A673 (cell line): ENCODE measurements at regions of chr6 and their contacts with region 1.

Region 1: DNA sequence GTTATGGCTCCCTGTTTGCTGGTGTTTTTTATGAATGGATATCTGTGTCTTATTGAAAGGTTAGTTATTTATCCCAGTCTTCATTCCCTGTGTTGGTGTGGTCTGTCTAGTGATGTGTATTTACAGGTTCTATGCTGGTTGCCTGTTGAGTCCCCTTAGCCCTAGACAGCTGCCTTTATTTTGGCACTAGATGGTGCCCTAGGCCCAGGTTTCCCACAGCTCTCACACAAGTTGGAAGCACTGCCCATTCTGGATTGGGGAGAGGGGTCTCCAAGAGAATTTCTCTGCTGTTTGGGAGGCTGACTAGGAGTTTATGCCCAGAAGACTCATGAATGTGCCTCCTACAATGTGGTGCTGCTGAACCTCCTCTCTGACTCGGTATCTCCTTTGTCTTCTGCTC is 12.4 kb downstream of the GRM1 start:
- DNase-seq: peak; percentile 68
- H3K4me3 ChIP-seq: no peak overlapping the region
- H3K27ac ChIP-seq: no peak overlapping the region
- H3K4me1 ChIP-seq: no peaks in the 10 kb centered on the region
- H3K27me3 ChIP-seq: peaks cover 8% of the 10 kb centered on the region
- CTCF ChIP-seq: peak; percentile 68

Region 2: GRCh38 chr6:146153040-146153758 is 111.9 kb after region 1 on chr6:
- CTCF ChIA-PET with region 1: no interaction called
- POLR2A ChIA-PET with region 1: no interaction called
- intact Hi-C with region 1: no loop called
- DNase-seq: no peak
- H3K4me3 ChIP-seq: no peak overlapping the region
- H3K27ac ChIP-seq: no peak overlapping the region
- H3K4me1 ChIP-seq: no peaks in the 10 kb centered on the region
- H3K27me3 ChIP-seq: no peaks in the 10 kb centered on the region
- CTCF ChIP-seq: no peak

Region 3: DNA sequence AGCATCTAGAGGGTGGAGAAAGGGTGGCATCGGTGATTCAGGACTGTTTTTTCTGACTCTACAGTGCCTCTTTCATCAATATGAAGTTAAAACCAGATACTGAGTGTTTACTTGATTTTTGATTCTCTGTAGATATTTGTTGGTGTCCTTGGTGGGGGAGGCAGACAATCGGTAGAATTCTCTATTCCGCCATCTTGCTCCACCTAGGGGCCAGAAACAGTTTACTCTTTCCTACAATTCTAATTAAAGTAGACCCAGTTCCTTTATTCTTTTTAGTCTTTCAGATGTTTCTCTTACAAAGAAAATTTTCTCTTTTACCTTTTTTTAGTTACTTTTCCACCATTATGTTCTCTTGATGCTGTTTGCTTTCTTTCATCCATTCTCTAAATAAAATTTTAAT is 340.2 kb after region 1 on chr6:
- CTCF ChIA-PET with region 1: no interaction called
- POLR2A ChIA-PET with region 1: no interaction called
- intact Hi-C with region 1: loop called (anchors 10 kb)
- DNase-seq: peak; percentile 20
- H3K4me3 ChIP-seq: no peak overlapping the region
- H3K27ac ChIP-seq: no peak overlapping the region
- H3K4me1 ChIP-seq: no peaks in the 10 kb centered on the region
- H3K27me3 ChIP-seq: no peaks in the 10 kb centered on the region
- CTCF ChIP-seq: peak; percentile 52

Region 4: DNA sequence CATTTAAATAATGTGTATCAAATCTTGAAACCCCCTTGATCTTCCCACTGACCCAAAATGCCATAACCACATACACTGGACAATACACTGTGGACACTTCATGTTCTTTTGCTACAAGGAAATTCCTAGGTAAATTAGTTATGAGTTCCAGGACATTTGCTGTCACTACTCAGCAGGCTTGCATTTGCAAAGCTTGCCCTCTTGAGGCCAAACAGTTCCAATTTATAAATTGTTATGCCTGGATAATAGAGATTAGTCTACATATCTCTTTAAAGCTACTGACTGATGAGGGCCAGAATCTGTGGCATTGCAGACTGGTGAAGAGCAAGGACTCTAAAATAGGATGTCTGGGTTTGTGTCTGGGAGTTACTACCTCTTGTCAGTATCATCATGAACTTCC is 484.9 kb after region 1 on chr6:
- CTCF ChIA-PET with region 1: no interaction called
- POLR2A ChIA-PET with region 1: no interaction called
- intact Hi-C with region 1: loop called (anchors 2 kb)
- DNase-seq: peak; percentile 19
- H3K4me3 ChIP-seq: no peak overlapping the region
- H3K27ac ChIP-seq: no peak overlapping the region
- H3K4me1 ChIP-seq: no peaks in the 10 kb centered on the region
- H3K27me3 ChIP-seq: no peaks in the 10 kb centered on the region
- CTCF ChIP-seq: peak; percentile 41; the same call in 1 of the 2 replicates

Region 5: DNA sequence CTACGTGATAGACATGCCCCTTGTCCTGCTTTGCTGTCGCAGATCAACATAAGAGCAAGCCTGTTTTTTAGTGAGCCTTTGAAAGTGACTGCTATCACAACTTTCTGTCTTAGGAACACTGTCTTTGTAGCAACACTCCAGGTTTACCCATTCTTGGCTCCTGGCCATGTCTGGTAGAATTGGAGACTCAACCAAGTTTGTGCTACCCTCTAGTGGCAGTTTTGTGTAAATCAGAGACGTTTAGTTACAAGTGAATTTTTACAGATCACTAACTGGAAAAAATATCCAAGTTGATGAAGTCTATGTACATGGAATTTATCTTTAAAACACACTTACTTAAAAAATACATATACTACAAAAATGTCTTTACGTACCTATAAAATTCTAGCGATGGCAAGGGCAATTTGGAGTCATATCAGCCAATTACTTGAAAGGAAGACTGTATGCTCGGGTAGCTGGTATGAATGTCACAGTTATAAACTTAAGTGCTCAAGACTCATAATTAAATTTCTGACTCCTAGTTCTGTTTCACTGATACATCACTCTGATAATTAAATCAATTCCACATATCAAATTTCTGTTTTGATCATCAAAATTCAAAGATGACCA is 658.9 kb after region 1 on chr6:
- CTCF ChIA-PET with region 1: interaction called, 4 read pairs
- POLR2A ChIA-PET with region 1: no interaction called
- intact Hi-C with region 1: loop called (anchors 1 kb)
- DNase-seq: peak; percentile 87
- H3K4me3 ChIP-seq: no peak overlapping the region
- H3K27ac ChIP-seq: no peak overlapping the region
- H3K4me1 ChIP-seq: no peaks in the 10 kb centered on the region
- H3K27me3 ChIP-seq: no peaks in the 10 kb centered on the region
- CTCF ChIP-seq: peak; percentile 78

Region 6: DNA sequence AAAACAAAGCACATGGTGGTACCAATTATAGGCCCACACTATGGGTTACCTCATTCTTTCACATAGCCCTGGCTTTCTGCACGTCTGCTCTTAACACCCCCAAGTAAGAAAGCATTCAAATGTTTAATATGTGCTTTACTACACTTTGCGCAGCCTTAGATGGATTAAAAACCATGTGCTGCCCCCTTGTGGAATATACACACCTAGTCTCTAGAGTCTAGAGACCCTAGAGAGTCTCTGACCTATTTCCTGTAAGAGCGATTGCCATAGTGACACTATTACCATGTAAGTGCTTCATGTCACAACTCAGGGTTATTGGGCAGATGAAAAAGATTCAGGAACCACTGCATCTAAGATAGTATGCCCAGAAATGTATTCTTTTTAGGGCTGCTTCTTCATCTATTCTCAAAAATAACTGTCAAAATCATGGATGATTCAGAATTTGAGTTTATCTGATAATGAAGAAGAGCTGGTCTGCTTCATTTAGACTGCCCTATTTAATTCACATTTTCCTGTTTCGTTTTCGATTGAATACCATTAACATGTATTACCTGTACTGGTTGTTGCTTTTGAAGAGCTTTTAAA is 743.8 kb after region 1 on chr6:
- CTCF ChIA-PET with region 1: no interaction called
- POLR2A ChIA-PET with region 1: no interaction called
- intact Hi-C with region 1: loop called (anchors 1 kb)
- DNase-seq: peak; percentile 77
- H3K4me3 ChIP-seq: no peak overlapping the region
- H3K27ac ChIP-seq: no peak overlapping the region
- H3K4me1 ChIP-seq: no peaks in the 10 kb centered on the region
- H3K27me3 ChIP-seq: no peaks in the 10 kb centered on the region
- CTCF ChIP-seq: peak; percentile 79